ENCODE measurements at regions of chrX and their contacts with region 1.

Region 1: DNA sequence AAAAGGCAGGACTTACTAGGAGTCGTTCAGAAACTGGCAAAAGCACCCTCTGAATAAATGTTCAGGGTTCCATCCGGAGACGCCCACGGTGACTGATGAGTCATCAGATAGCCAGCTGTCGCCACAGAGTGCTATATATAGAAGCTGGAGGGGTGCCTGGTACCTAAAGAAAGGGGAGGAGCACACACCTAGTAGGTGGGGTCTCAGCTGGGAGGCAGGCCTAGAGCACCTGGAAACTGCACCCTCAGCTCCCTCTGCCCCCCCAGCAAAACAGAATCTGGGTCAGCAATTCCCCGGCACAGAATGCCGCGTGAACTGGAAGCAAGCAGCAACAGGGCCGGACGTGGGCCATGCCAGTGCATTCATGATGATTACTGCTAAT is 242.0 kb downstream of the BCOR start:
- DNase-seq: peak; percentile 49
- ATAC-seq: peak; percentile 57
- H3K4me3 Mint-ChIP-seq: peak overlapping the region; percentile 84
- H3K27ac Mint-ChIP-seq: peak overlapping the region; percentile 97
- H3K4me1 Mint-ChIP-seq: peaks cover 46% of the 10 kb centered on the region
- H3K27me3 Mint-ChIP-seq: no peaks in the 10 kb centered on the region

Region 2: DNA sequence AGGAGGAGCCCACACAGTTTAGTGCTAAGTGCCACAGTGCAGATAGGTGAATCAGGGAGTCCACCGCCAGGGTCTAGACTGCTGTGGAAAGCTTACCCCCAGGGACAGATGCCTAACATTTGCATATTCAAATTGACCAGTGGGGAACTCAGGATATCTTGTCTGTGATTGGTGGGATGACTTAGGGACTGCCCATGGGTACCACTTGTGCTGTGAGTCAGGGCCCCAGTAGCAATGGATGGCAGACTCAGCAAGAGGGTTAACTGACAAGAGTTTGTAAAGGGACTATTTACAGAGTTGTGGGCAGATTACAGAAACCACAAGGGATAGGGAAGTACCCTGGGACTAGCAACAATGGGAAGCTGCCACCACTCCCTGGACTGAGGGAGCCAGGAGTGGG is 40.1 kb before region 1 on chrX:
- POLR2A ChIA-PET with region 1: interaction called, 14 read pairs
- DNase-seq: no peak
- ATAC-seq: no peak
- H3K4me3 Mint-ChIP-seq: no peak overlapping the region
- H3K27ac Mint-ChIP-seq: no peak overlapping the region
- H3K4me1 Mint-ChIP-seq: peaks cover 14% of the 10 kb centered on the region
- H3K27me3 Mint-ChIP-seq: peaks cover 1% of the 10 kb centered on the region

Region 3: DNA sequence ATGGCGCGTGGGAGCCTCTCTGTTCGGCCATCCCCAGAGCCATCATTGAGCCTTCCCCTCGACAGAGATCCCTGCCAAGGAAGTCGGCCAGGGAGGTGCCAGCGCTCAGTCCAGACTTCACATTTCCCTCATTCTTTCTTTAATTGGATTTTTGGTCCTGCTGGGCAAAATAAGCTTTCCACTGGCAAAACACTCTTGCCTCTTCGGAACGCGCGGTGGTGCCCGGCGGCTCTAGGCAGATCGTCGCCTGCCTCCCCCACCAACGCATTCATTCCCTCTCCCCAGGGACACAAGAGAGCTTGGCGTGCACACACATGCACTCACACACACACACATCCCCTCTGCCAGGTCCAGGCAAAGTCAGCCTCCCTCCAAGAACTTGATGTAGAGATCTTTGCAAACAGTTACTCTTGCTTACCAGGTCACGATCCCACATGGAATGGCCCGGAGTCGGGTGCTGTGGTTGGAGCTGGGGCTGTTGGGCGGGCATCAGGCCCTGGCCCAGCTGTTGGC is 15.1 kb before region 1 on chrX:
- POLR2A ChIA-PET with region 1: no interaction called
- DNase-seq: no peak
- ATAC-seq: no peak
- H3K4me3 Mint-ChIP-seq: no peak overlapping the region
- H3K27ac Mint-ChIP-seq: no peak overlapping the region
- H3K4me1 Mint-ChIP-seq: no peaks in the 10 kb centered on the region
- H3K27me3 Mint-ChIP-seq: peaks cover 3% of the 10 kb centered on the region

Region 4: DNA sequence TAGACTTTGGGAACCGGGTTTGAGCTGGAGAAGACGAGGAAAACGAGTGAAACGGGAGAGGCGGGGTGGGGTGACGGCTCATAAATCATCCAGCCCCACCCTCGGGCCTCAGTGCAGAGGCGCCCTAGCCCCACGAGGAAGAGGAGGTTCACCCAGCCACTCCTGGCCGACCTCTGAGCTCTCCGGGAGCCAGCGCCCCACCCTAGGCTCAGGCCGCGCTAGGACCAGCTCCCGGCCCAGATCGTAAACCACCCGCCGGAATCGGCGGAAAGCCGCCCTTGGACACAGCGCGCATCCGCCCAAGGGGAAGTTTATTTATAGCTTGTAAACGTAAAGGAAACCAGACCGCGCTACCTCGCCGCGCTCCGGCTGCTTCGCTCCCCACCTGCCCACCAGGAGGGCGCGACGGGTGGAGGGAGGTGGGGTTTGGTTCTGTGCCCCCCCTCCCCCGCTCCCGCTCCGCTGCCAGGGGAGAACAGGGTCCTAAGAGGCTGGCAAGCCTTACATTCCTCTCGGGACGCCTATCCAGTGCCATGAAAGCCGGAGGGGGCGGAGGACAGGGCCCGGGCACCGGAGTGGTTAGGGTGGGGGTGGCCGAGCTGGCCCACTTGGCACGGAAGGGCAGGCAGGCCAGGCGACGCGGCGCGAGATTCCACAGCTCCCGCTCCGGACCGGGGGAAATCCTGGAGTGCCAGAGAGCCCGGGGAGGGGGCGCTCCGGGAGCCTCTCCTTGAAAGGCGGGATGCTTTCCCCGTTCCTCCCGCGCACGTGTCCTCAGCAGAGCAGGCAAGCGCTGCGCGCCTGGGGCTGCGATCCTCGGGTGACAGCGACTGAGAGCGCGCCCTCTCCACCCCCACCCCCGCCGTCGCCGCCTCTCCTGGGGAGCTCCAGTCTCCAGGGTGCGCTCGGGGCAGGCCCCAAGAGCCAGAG is 157.8 kb after region 1 on chrX:
- POLR2A ChIA-PET with region 1: interaction called, 10 read pairs
- DNase-seq: peak; percentile 62
- ATAC-seq: peak; percentile 46
- H3K4me3 Mint-ChIP-seq: peak overlapping the region; percentile 75
- H3K27ac Mint-ChIP-seq: peak overlapping the region; percentile 80
- H3K4me1 Mint-ChIP-seq: peaks cover 22% of the 10 kb centered on the region
- H3K27me3 Mint-ChIP-seq: peaks cover 11% of the 10 kb centered on the region

Measured in activated naive CD8-positive, alpha-beta T cell treated with anti-CD3 and anti-CD28 coated beads, Interleukin-2, amount 10 ng/mL, durations not matched to agents 7 days and 5 days (primary cell).